Vagina (tissue), 2 donors: ENCODE measurements at regions of chr18 and their contacts with region 1.

Region 1: GRCh38 chr18:9474983-9475642 is at the start of gene RALBP1:
- DNase-seq: peak; percentile 98 to 99
- H3K4me3 ChIP-seq: peak within 1 kb of the TSS; percentile 85 to 97
- H3K27ac ChIP-seq: peak within 1 kb of the TSS; percentile 91
- H3K4me1 ChIP-seq: peaks cover 26% of the 10 kb centered on the region
- H3K27me3 ChIP-seq: no peaks in the 10 kb centered on the region
- CTCF ChIP-seq: peak in 1 of 3 experiments; percentile 11
- POLR2A ChIP-seq: peak; percentile 42 to 83
- total RNA-seq, gene RALBP1: 65.6 TPM

Region 2: DNA sequence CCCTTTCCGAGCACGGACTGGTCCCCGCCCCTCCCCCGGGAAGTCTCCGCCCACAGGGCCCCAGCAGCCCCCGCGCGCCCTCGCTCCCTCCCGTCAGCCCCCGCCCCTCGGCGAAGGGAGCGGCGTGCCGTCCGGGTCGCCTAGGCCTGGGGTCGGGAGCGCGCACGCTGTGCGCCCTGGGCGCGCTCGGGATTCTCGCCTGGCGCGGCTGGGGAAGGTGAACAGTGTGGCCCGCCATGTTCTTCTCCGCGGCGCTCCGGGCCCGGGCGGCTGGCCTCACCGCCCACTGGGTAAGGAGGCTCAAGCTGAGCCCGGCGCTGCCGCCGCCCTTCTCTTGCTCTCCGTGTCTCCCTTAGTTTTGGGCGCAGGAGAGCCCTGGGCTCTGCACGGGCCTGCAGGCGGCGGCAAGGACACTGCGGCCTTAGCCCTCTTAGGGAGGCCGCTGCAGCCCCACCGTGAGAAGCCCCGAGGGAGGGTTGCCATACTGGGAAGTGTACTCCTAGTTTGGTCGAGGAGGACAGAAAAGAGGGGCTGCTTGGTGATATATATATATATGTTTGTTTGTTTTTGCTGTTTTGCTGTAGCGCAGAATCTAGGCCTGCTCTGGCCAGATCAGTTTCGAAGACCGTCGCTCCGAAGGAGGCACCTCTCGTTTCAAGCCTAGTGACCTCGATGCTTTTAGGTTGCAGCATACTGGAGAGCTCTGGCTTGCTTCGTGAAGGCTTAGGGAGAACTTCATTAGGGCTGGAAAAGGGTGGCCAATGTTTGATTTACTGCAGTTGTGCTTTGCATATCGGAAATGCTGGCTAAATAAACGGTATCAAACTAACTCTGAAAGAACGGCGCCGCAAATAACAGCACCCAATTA is 372.4 kb before region 1 on chr18 and contains the start of gene NDUFV2:
- intact Hi-C with region 1: loop called (anchors 2 kb)
- DNase-seq: peak in 1 of 2 donors; percentile 96
- H3K4me3 ChIP-seq: peak within 1 kb of the TSS; percentile 47 to 78
- H3K27ac ChIP-seq: peak within 1 kb of the TSS; percentile 93
- H3K4me1 ChIP-seq: peaks cover 53% of the 10 kb centered on the region
- H3K27me3 ChIP-seq: no peaks in the 10 kb centered on the region
- CTCF ChIP-seq: no peak
- POLR2A ChIP-seq: peak; percentile 30 to 91
- total RNA-seq, gene NDUFV2: 75.1 TPM

Region 3: GRCh38 chr18:9334329-9334972 is 140.7 kb before region 1 on chr18 and contains the start of gene TWSG1:
- intact Hi-C with region 1: loop called (anchors 10 kb)
- DNase-seq: peak in 1 of 2 donors; percentile 95
- H3K4me3 ChIP-seq: peak within 1 kb of the TSS; percentile 75 to 94
- H3K27ac ChIP-seq: peak within 1 kb of the TSS; percentile 94
- H3K4me1 ChIP-seq: peaks cover 20% of the 10 kb centered on the region
- H3K27me3 ChIP-seq: no peaks in the 10 kb centered on the region
- CTCF ChIP-seq: peak in 1 of 3 experiments; percentile 33
- POLR2A ChIP-seq: peak in 1 of 2 donors; percentile 79
- total RNA-seq, gene TWSG1: 45.4 TPM

Region 4: DNA sequence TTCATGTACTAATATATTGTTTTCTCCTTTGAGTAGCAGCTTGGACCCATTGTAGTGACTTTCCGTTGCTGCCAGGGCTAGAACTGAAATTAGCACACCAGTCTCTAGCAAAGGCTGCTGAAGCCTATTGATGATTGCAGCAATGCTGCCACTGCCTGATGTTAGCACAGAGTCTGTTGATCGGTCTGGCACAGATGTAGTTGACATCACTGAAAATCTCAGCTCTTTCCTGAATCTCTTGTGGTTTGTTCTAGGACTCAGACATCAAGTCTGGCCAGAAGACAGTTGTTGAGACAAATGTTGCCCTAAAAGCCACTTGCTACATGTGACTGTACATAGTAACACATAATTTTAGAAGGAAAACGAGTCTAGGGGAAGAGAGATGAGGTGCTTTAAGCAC is 485.9 kb after region 1 on chr18:
- intact Hi-C with region 1: no loop called
- DNase-seq: no peak
- H3K4me3 ChIP-seq: no peak overlapping the region
- H3K27ac ChIP-seq: no peak overlapping the region
- H3K4me1 ChIP-seq: no peaks in the 10 kb centered on the region
- H3K27me3 ChIP-seq: no peaks in the 10 kb centered on the region
- CTCF ChIP-seq: no peak
- POLR2A ChIP-seq: no peak